ENCODE measurements at regions of chr3 and their contacts with region 1.

Region 1: GRCh38 chr3:132180337-132180791 is 136.8 kb upstream of the ACP3 start:
- DNase-seq: peak in 2 of 4 experiments; percentile 18 to 20
- ATAC-seq: peak; percentile 67; the same call in 2 of the 3 replicates
- H3K4me3 ChIP-seq: no peak overlapping the region
- H3K27ac ChIP-seq: no peak overlapping the region
- H3K4me1 ChIP-seq: no peaks in the 10 kb centered on the region
- H3K27me3 ChIP-seq: no peaks in the 10 kb centered on the region
- CTCF ChIP-seq: peak in 2 of 3 experiments; percentile 34 to 59; a peak in 4 of 6 replicates
- EP300 ChIP-seq: no peak
- POLR2A ChIP-seq: no peak
- RAD21 ChIP-seq: peak; percentile 35 to 49

Region 2: GRCh38 chr3:130341388-130341787 is 1839.0 kb before region 1 on chr3:
- CTCF ChIA-PET with region 1: no interaction called
- POLR2A ChIA-PET with region 1: no interaction called
- in situ Hi-C with region 1: no loop called
- intact Hi-C with region 1: no loop called
- DNase-seq: no peak
- ATAC-seq: no peak
- H3K4me3 ChIP-seq: no peak overlapping the region
- H3K27ac ChIP-seq: no peak overlapping the region
- H3K4me1 ChIP-seq: peaks cover 4 to 40% of the 10 kb centered on the region in 2 experiments; a peak in 4 of 5 replicates
- H3K27me3 ChIP-seq: no peaks in the 10 kb centered on the region
- CTCF ChIP-seq: no peak
- EP300 ChIP-seq: no peak
- POLR2A ChIP-seq: no peak
- RAD21 ChIP-seq: no peak

Region 3: DNA sequence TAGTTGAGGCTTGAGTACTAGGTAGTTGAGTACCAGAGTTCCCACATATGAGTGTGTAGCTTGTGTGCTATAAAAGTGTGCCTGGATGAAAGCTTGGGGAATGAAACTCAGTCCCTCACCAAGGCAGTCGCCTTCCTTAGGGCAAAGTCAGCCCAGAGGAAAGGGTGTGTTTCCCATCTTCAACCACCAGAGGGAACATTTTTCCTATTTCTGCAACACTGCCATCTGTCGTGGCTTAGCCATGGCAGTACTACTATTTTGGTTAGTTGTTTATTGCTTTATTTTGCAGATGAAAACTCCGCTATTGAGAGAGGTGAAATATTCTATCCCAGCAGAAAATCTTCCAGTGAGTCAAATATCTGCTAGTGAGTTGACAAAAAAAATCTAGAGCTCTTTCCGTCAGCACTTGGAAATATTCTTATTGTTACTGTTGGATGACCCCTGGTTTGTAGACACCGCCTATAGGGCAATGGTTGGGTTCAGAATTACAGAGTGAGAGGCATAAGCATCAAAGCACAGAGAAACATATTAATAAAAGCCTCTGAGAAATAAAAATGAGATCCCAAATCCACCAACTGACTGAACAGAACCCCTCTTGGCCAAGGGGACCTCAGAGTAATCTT is 385.5 kb before region 1 on chr3:
- CTCF ChIA-PET with region 1: no interaction called
- POLR2A ChIA-PET with region 1: no interaction called
- in situ Hi-C with region 1: no loop called
- intact Hi-C with region 1: loop called (anchors 10 kb)
- DNase-seq: peak; percentile 30 to 48 (median 44)
- ATAC-seq: peak; percentile 95
- H3K4me3 ChIP-seq: no peak overlapping the region
- H3K27ac ChIP-seq: no peak overlapping the region
- H3K4me1 ChIP-seq: peaks cover 0 to 8% of the 10 kb centered on the region in 2 experiments; a peak in 2 of 5 replicates
- H3K27me3 ChIP-seq: no peaks in the 10 kb centered on the region
- CTCF ChIP-seq: peak; percentile 68 to 98 (median 89)
- EP300 ChIP-seq: no peak
- POLR2A ChIP-seq: no peak
- RAD21 ChIP-seq: peak; percentile 52 to 70

Region 4: GRCh38 chr3:132722164-132723024 is 542.0 kb after region 1 on chr3 and contains the start of gene NPHP3:
- CTCF ChIA-PET with region 1: no interaction called
- POLR2A ChIA-PET with region 1: no interaction called
- in situ Hi-C with region 1: no loop called
- intact Hi-C with region 1: no loop called
- DNase-seq: peak; percentile 92 to 94 (median 92)
- ATAC-seq: peak; percentile 91
- H3K4me3 ChIP-seq: peak within 1 kb of the TSS; percentile 70
- H3K27ac ChIP-seq: peak within 1 kb of the TSS; percentile 80
- H3K4me1 ChIP-seq: peaks cover 9 to 16% of the 10 kb centered on the region in 2 experiments; a peak in 4 of 5 replicates
- H3K27me3 ChIP-seq: no peaks in the 10 kb centered on the region
- CTCF ChIP-seq: no peak
- EP300 ChIP-seq: no peak
- POLR2A ChIP-seq: peak; percentile 36
- RAD21 ChIP-seq: no peak
- polyA plus RNA-seq, gene NPHP3: 0.62 to 1.8 TPM